Activated CD8-positive, alpha-beta T cell treated with anti-CD3 and anti-CD28 coated beads for 36 hours (primary cell): ENCODE measurements at regions of chr19 and their contacts with region 1.

Region 1: DNA sequence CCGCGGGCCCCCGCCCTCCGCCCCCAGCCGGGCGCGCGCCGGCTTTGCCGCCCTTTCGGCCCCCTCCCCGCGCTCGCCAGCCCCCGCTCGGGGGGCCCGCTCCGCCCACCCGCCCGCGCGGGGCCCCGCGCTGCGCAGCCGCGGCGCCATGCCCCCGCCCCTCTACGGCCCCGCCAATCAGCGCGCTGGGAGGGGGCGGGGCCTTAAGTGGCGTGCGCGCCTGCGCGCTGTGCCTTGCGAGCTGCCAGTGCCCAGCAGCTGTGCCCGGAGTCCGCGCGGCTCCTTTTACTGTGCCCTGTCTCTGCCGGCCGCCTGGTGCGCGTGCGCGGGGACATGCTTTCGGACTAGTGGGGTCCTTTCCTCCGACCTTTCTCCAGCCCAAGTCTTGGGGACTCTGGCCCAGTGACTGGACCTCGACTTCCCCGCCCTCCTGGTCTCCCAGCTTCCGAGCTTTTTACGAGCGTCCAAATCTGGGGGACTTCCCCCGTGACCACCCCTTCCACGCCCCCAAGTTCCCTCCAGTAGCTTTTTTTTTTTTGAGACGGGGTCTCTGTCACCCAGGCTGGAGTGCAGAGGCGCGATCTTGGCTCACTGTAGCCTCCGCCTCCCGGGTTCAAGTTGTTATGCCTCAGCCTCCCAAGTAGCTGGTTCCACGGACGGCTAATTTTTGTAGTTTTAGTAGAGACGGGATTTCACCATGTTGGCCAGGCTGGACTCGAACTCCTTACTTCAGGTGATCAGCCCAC is at the start of gene MBD3:
- DNase-seq: peak; percentile 88
- ATAC-seq: peak; percentile 88
- H3K4me3 Mint-ChIP-seq: peak within 1 kb of the TSS; percentile 92
- H3K27ac Mint-ChIP-seq: peak within 1 kb of the TSS; percentile 95
- H3K4me1 Mint-ChIP-seq: peaks cover 15% of the 10 kb centered on the region
- H3K27me3 Mint-ChIP-seq: no peaks in the 10 kb centered on the region
- CTCF ChIP-seq: no peak
- total RNA-seq, gene MBD3: 87.8 to 92.5 TPM

Region 2: DNA sequence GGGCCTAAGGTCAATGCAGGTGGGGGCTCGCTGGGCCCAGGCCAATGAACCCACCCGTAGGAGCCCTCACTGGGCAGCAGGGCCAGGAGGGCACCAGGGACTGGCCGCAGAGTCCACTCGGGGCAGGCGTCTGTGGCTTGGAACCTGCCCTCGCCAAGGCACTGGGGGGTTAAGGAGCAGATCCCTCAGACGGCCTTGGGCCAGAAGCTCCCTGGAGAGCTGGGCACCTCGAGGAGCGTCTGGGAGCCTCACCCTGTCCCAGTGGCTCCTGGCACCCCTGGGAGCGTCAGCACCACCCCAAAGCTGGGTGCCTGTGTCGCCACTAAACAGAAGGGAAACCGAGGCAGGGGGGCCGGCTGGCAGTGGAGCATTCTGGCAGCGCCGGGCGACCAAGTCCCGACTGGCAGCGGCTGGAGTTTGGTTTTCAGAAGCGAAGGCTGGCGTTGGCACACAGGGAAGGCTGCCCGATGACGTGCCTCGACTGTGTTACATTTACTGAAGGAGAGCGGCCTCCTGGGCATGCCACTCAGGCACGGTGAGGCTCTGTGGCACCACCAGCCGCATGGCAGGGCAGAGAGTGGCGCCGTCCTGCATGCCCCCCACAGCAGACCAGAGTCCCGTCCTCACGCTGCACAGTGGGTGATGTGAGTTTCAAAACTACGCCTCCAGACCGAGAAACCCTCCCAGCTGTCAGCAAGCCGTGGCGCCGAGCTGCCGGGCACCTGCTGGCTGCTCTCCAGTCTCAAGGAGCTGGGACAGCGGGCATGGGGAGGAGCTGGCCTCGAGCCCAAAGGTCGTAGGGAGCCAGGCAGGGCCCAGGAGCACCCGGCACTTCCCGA is 15.6 kb before region 1 on chr19:
- CTCF ChIA-PET with region 1: interaction called, 3 read pairs
- POLR2A ChIA-PET with region 1: interaction called, 26 read pairs
- intact Hi-C with region 1: no loop called
- DNase-seq: no peak
- ATAC-seq: no peak
- H3K4me3 Mint-ChIP-seq: no peak overlapping the region
- H3K27ac Mint-ChIP-seq: no peak overlapping the region
- H3K4me1 Mint-ChIP-seq: no peaks in the 10 kb centered on the region
- H3K27me3 Mint-ChIP-seq: no peaks in the 10 kb centered on the region
- CTCF ChIP-seq: no peak

Region 3: GRCh38 chr19:1605236-1606137 is 12.6 kb after region 1 on chr19 and contains the start of gene UQCR11:
- CTCF ChIA-PET with region 1: interaction called, 10 read pairs
- POLR2A ChIA-PET with region 1: interaction called, 26 read pairs
- intact Hi-C with region 1: no loop called
- DNase-seq: peak; percentile 97
- ATAC-seq: peak; percentile 90
- H3K4me3 Mint-ChIP-seq: peak within 1 kb of the TSS; percentile 85
- H3K27ac Mint-ChIP-seq: peak within 1 kb of the TSS; percentile 97
- H3K4me1 Mint-ChIP-seq: peaks cover 38% of the 10 kb centered on the region
- H3K27me3 Mint-ChIP-seq: no peaks in the 10 kb centered on the region
- CTCF ChIP-seq: peak; percentile 48
- total RNA-seq, gene UQCR11: 231 TPM

Region 4: GRCh38 chr19:1618157-1619093 is 25.5 kb after region 1 on chr19:
- CTCF ChIA-PET with region 1: no interaction called
- POLR2A ChIA-PET with region 1: no interaction called
- intact Hi-C with region 1: no loop called
- DNase-seq: peak; percentile 54
- ATAC-seq: peak; percentile 83
- H3K4me3 Mint-ChIP-seq: no peak overlapping the region
- H3K27ac Mint-ChIP-seq: peak overlapping the region; percentile 60
- H3K4me1 Mint-ChIP-seq: peaks cover 24% of the 10 kb centered on the region
- H3K27me3 Mint-ChIP-seq: no peaks in the 10 kb centered on the region
- CTCF ChIP-seq: peak; percentile 26

Region 5: GRCh38 chr19:1652471-1653299 is 59.8 kb after region 1 on chr19 and contains the start of gene TCF3:
- CTCF ChIA-PET with region 1: interaction called, 3 read pairs
- POLR2A ChIA-PET with region 1: interaction called, 25 read pairs
- intact Hi-C with region 1: no loop called
- DNase-seq: peak; percentile 99
- ATAC-seq: peak; percentile 92
- H3K4me3 Mint-ChIP-seq: peak within 1 kb of the TSS; percentile 83
- H3K27ac Mint-ChIP-seq: peak within 1 kb of the TSS; percentile 93
- H3K4me1 Mint-ChIP-seq: peaks cover 24% of the 10 kb centered on the region
- H3K27me3 Mint-ChIP-seq: no peaks in the 10 kb centered on the region
- CTCF ChIP-seq: no peak
- total RNA-seq, gene TCF3: 124 to 126 TPM